ENCODE measurements at regions of chr1 and their contacts with region 1.

Region 1: GRCh38 chr1:222465211-222466041 is 82.5 kb downstream of the HHIPL2 start:
- DNase-seq: peak; percentile 66 to 84 (median 79)
- H3K4me3 ChIP-seq: peak overlapping the region; percentile 62 to 73
- H3K4me3 Mint-ChIP-seq: peak overlapping the region; percentile 82 to 95 (median 89)
- H3K27ac ChIP-seq: peak overlapping the region; percentile 31
- H3K27ac Mint-ChIP-seq: peak overlapping the region; percentile 62 to 95 (median 91)
- H3K4me1 ChIP-seq: peaks cover 12% of the 10 kb centered on the region
- H3K4me1 Mint-ChIP-seq: peaks cover 8 to 14% (median 11%) of the 10 kb centered on the region in 4 donors
- H3K27me3 ChIP-seq: no peaks in the 10 kb centered on the region
- H3K27me3 Mint-ChIP-seq: peaks cover 0 to 5% of the 10 kb centered on the region in 2 donors

Region 2: DNA sequence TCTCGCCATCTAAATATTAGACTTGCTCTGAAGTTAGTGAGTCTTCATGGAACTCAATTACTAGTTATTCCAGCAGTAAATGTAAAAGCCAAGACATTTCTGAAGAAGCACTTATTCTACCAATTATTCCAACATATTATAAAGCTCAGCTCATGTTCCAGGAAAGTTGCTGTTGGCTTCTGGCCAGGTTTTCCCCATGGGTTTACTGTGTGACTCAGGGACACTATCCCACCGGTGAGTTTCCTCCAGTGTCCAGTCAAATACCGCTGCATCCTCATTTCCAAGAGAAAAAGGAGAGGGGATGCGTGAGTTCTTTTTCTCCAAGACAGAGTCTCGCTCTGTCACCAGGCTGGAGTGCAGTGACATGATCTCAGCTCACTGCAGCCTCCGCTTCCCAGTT is 91.7 kb after region 1 on chr1:
- CTCF ChIA-PET with region 1: interaction called, 5 read pairs
- POLR2A ChIA-PET with region 1: no interaction called
- intact Hi-C with region 1: loop called (anchors 10 kb)
- DNase-seq: no peak
- H3K4me3 ChIP-seq: no peak overlapping the region
- H3K4me3 Mint-ChIP-seq: no peak overlapping the region
- H3K27ac ChIP-seq: no peak overlapping the region
- H3K27ac Mint-ChIP-seq: no peak overlapping the region
- H3K4me1 ChIP-seq: no peaks in the 10 kb centered on the region
- H3K4me1 Mint-ChIP-seq: peaks cover 0 to 2% (median 0%) of the 10 kb centered on the region in 4 donors
- H3K27me3 ChIP-seq: no peaks in the 10 kb centered on the region
- H3K27me3 Mint-ChIP-seq: no peaks in the 10 kb centered on the region

Region 3: GRCh38 chr1:222634180-222635013 is 169.0 kb after region 1 on chr1:
- CTCF ChIA-PET with region 1: interaction called, 99 read pairs
- POLR2A ChIA-PET with region 1: interaction called, 17 read pairs
- intact Hi-C with region 1: no loop called
- DNase-seq: peak; percentile 75 to 79 (median 78)
- H3K4me3 ChIP-seq: no peak overlapping the region
- H3K4me3 Mint-ChIP-seq: no peak overlapping the region
- H3K27ac ChIP-seq: no peak overlapping the region
- H3K27ac Mint-ChIP-seq: peak overlapping the region in 5 of 7 donors; percentile 8 to 76 (median 54)
- H3K4me1 ChIP-seq: no peaks in the 10 kb centered on the region
- H3K4me1 Mint-ChIP-seq: peaks cover 4 to 13% (median 5%) of the 10 kb centered on the region in 4 donors
- H3K27me3 ChIP-seq: no peaks in the 10 kb centered on the region
- H3K27me3 Mint-ChIP-seq: no peaks in the 10 kb centered on the region

Region 4: GRCh38 chr1:222814536-222815439 is 349.4 kb after region 1 on chr1 and contains the start of gene DISP1:
- CTCF ChIA-PET with region 1: no interaction called
- POLR2A ChIA-PET with region 1: no interaction called
- intact Hi-C with region 1: loop called (anchors 10 kb)
- DNase-seq: peak; percentile 67 to 74 (median 68)
- H3K4me3 ChIP-seq: peak within 1 kb of the TSS; percentile 40 to 75
- H3K4me3 Mint-ChIP-seq: peak within 1 kb of the TSS; percentile 91 to 97 (median 94)
- H3K27ac ChIP-seq: peak within 1 kb of the TSS; percentile 52
- H3K27ac Mint-ChIP-seq: peak within 1 kb of the TSS; percentile 55 to 95 (median 93)
- H3K4me1 ChIP-seq: peaks cover 18% of the 10 kb centered on the region
- H3K4me1 Mint-ChIP-seq: peaks cover 18 to 30% (median 24%) of the 10 kb centered on the region in 4 donors
- H3K27me3 ChIP-seq: no peaks in the 10 kb centered on the region
- H3K27me3 Mint-ChIP-seq: peaks cover 2% of the 10 kb centered on the region in 2 donors
- total RNA-seq, gene DISP1: 3.9 to 4.2 TPM

Region 5: GRCh38 chr1:223087291-223088255 is 622.1 kb after region 1 on chr1:
- CTCF ChIA-PET with region 1: interaction called, 16 read pairs
- POLR2A ChIA-PET with region 1: no interaction called
- intact Hi-C with region 1: no loop called
- DNase-seq: no peak
- H3K4me3 ChIP-seq: no peak overlapping the region
- H3K4me3 Mint-ChIP-seq: no peak overlapping the region
- H3K27ac ChIP-seq: no peak overlapping the region
- H3K27ac Mint-ChIP-seq: no peak overlapping the region
- H3K4me1 ChIP-seq: no peaks in the 10 kb centered on the region
- H3K4me1 Mint-ChIP-seq: peaks cover 0 to 10% (median 1%) of the 10 kb centered on the region in 4 donors
- H3K27me3 ChIP-seq: no peaks in the 10 kb centered on the region
- H3K27me3 Mint-ChIP-seq: no peaks in the 10 kb centered on the region

Measured in CD4-positive, alpha-beta memory T cell (primary cell).